ENCODE measurements at regions of chr14 and their contacts with region 1.

Region 1: GRCh38 chr14:101635749-101636560 is 74.7 kb downstream of the DIO3 start:
- DNase-seq: no peak
- ATAC-seq: no peak

Region 2: DNA sequence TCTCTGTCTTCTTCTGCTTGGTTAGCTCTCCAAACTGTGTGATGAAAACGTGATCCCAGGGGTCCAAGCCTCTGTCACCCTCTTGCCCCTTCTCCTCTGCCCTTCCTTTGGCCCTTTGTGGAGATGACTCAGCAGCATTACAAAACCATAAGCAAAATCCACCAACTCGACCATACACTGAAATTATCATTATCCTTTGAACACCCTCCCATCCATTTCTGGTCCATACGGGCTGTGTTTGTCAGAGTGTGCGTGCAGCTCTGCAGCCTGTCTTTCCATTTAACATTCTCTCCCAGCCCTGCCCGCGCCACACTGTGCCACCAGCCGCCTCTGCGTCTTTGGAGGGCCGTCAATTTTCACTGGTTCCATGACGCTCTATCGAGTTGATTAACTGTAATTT is 1243.6 kb before region 1 on chr14:
- intact Hi-C with region 1: loop called (anchors 10 kb)
- DNase-seq: no peak
- ATAC-seq: peak; percentile 61

Region 3: GRCh38 chr14:100662879-100663760 is 972.8 kb before region 1 on chr14:
- intact Hi-C with region 1: loop called (anchors 10 kb)
- DNase-seq: peak; percentile 80
- ATAC-seq: peak; percentile 65